ENCODE measurements at regions of chr12 and their contacts with region 1.

Region 1: GRCh38 chr12:53746592-53747092 is 5.1 kb downstream of the CISTR start:
- H3K4me3 ChIP-seq: no peak overlapping the region
- H3K27ac ChIP-seq: no peak overlapping the region; the same call in 1 of the 2 replicates
- H3K4me1 ChIP-seq: peaks cover 4% of the 10 kb centered on the region
- CTCF ChIP-seq: peak; percentile 99

Region 2: DNA sequence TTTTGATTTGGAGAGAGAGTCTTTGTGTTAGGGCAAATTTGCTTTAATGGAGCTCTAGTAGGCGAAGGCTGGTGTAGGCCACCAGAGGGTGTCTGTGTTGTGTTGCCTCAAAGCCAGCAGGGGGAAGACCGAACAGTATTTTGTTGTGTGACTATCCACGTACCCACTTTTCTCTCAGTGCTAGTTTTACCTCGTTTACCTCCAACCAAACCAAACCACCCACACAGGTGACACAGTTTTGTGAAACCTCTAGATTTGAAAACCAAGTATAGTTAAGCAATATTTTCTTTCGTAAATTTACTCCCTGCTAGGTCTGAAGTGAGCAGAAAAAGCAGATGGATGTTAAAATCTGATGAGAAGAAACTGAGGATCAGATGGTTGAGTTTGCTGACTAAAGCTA is 203.1 kb before region 1 on chr12:
- CTCF ChIA-PET with region 1: interaction called, 14 read pairs
- POLR2A ChIA-PET with region 1: no interaction called
- H3K4me3 ChIP-seq: no peak overlapping the region
- H3K27ac ChIP-seq: no peak overlapping the region; the same call in 1 of the 2 replicates
- H3K4me1 ChIP-seq: peaks cover 9% of the 10 kb centered on the region
- CTCF ChIP-seq: peak; percentile 88

Region 3: DNA sequence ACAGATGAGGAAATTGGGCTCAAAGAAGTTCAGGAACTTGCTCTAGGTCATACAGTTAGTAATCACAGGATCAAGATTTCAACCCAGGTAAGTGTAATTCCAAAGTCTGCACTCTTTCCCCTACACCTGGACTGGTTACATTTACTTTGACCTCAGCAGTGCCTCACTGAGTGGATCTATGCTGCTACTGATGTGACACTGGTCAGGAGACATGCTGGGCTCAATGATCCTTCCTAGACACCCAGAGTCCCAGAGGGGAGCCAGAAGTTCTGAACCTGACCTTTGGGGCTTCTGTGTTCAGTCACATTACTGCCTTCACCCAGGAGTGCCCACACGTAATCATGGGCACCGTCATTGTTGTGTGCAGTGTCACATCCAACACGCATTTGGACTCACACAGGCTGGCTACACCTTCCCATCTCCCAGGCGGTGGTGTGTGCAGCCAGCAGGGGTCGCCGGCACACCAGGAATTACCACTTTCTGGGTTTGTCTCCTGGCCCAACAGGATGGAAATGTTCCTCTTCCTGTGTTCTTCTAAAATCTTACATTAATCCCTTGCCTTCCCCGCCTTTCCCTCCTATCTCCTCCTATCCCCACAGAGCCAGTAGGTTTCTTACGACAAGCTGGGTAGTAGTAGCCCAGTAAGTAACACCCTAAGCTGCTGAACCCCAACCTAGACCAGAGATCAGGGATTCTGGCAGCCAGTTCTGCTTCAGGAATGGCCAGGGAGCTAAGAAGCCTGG is 45.0 kb before region 1 on chr12:
- CTCF ChIA-PET with region 1: interaction called, 915 read pairs
- POLR2A ChIA-PET with region 1: interaction called, 5 read pairs
- H3K4me3 ChIP-seq: no peak overlapping the region
- H3K27ac ChIP-seq: no peak overlapping the region
- H3K4me1 ChIP-seq: peaks cover 1% of the 10 kb centered on the region; the same call in 1 of the 2 replicates
- CTCF ChIP-seq: peak; percentile 97

Region 4: GRCh38 chr12:53727310-53728041 is 19.2 kb before region 1 on chr12 and contains the start of gene CALCOCO1:
- CTCF ChIA-PET with region 1: interaction called, 327 read pairs
- POLR2A ChIA-PET with region 1: interaction called, 6 read pairs
- H3K4me3 ChIP-seq: peak within 1 kb of the TSS; percentile 65
- H3K27ac ChIP-seq: peak within 1 kb of the TSS; percentile 4; the same call in 1 of the 2 replicates
- H3K4me1 ChIP-seq: peaks cover 2% of the 10 kb centered on the region; the same call in 1 of the 2 replicates
- CTCF ChIP-seq: no peak

Region 5: GRCh38 chr12:53770281-53770680 is 23.6 kb after region 1 on chr12:
- CTCF ChIA-PET with region 1: interaction called, 15 read pairs
- POLR2A ChIA-PET with region 1: no interaction called
- H3K4me3 ChIP-seq: no peak overlapping the region
- H3K27ac ChIP-seq: no peak overlapping the region
- H3K4me1 ChIP-seq: peaks cover 3% of the 10 kb centered on the region
- CTCF ChIP-seq: no peak

Region 6: DNA sequence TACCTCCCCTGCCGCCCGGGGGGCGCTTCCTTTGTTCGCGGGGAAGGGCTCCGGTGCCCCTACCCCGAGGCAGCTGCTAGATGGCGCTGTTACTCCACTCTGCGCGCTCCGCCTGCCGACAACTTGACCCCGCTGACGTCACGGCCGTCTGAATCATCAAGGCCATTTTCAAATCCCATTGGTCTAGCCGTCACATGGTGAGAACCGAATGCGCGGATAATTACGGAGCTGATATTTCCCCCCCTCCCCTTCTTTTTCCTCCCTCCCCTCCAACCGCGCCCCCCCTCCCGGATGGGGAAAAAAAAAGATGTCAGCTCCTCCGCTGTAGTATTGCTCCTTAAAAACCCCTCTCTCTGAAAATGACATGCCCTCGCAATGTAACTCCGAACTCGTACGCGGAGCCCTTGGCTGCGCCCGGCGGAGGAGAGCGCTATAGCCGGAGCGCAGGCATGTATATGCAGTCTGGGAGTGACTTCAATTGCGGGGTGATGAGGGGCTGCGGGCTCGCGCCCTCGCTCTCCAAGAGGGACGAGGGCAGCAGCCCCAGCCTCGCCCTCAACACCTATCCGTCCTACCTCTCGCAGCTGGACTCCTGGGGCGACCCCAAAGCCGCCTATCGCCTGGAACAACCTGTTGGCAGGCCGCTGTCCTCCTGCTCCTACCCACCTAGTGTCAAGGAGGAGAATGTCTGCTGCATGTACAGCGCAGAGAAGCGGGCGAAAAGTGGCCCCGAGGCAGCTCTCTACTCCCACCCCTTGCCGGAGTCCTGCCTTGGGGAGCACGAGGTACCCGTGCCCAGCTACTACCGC is 238.5 kb after region 1 on chr12 and contains the start of gene HOXC10:
- CTCF ChIA-PET with region 1: interaction called, 23 read pairs
- POLR2A ChIA-PET with region 1: no interaction called
- H3K4me3 ChIP-seq: peak within 1 kb of the TSS; percentile 32
- H3K27ac ChIP-seq: peak within 1 kb of the TSS; percentile 90
- H3K4me1 ChIP-seq: peaks cover 25% of the 10 kb centered on the region
- CTCF ChIP-seq: peak; percentile 81

Measured in HEK293 (cell line).